ENCODE measurements at regions of chr6 and their contacts with region 1.

Region 1: GRCh38 chr6:6811151-6812002 is 222.9 kb downstream of the LY86 start:
- DNase-seq: peak; percentile 91
- H3K4me3 ChIP-seq: peak overlapping the region; percentile 24 to 69 (median 37)
- H3K27ac ChIP-seq: peak overlapping the region; percentile 91
- H3K4me1 ChIP-seq: peaks cover 17% of the 10 kb centered on the region
- H3K27me3 ChIP-seq: peaks cover 2 to 12% of the 10 kb centered on the region in 2 experiments
- CTCF ChIP-seq: no peak
- POLR2A ChIP-seq: no peak

Region 2: DNA sequence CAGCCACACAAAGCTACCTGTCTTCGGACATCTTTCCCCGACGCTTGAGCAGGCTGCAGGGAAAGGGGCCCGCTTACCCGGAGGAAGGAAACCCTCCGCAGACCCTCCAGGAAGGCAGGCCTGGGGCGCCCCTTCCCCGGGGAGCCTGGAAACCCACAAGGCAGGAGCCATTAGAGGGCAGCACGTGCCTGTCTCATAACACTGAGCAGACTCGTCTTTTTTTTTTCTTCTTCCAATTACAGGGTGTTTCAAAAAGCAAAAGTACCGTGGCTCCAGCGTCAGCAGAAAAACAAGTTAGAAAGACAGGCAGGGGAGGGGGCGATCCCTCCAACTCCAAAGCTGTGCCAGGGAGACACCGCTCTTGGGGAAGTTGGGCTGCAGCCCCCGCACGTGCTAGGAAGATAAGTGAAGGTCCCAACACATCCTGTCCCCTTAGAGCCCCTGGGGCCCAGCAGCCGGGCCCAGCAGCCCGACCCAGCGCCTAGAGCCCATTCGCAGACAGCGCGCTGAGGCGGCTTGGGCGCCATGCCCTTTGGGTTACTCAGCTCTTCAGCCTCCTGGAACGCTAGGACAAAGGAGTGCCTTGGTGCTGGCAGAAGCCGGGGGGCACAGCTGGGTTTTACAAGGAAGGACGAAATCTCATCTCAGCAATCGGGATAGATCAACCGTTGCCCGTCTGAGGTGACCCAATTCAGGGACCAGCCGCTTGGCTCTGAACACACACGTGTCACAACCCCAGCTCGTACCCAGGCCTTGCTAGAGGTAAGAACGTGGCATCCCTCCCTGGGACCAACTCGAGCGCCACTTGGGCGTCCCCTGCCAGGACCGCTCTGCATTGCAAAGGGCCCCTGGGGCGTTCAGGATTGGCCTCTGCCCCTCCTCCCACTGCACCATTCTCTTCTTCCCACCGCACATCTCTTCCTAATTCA is 86.6 kb before region 1 on chr6:
- CTCF ChIA-PET with region 1: no interaction called
- POLR2A ChIA-PET with region 1: no interaction called
- dilution Hi-C with region 1: no loop called
- intact Hi-C with region 1: loop called (anchors 1 kb)
- DNase-seq: peak; percentile 83
- H3K4me3 ChIP-seq: peak overlapping the region in 1 of 3 experiments; percentile 16
- H3K27ac ChIP-seq: peak overlapping the region; percentile 59
- H3K4me1 ChIP-seq: peaks cover 19% of the 10 kb centered on the region
- H3K27me3 ChIP-seq: peaks cover 0 to 2% of the 10 kb centered on the region in 2 experiments
- CTCF ChIP-seq: peak; percentile 57 to 60
- POLR2A ChIP-seq: no peak

Region 3: DNA sequence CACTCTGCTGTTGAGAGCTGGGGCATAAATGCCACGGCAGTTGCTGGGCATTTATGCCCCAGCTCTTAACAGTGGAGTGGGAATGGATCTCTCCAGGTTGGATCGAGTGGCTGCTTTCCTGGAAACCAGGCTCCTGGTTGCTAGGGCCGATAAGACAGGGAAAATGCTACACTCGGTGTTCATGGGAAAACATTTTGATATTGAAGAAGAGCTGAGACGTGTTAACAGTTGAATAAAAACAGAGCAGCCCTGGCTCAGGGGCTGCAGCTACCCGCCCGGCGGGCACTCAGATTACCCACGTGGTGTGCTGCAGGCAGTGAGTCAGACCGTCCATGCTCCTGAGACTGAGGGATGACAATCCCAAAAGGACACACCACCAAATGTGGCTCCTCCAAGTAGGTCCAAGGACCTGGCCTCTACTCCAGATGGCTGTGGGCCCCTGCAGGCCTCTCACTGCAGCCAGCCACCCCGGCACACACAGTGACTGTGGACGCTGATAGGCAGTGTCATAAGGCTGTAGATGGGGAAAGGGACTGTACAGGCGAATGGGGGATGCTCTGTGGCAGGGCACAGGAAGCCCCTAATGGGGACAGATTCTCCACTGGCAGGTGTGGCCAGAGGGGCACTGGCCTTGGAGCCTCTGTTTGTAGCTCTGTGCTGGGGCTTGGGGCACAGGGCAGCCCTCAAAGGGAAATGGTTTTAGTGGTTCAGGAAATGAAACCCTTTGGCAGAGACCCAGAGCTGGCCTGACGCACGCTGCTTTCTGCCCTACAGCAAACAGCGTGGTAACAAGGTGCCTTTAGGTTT is 14.9 kb after region 1 on chr6:
- CTCF ChIA-PET with region 1: interaction called, 9 read pairs
- POLR2A ChIA-PET with region 1: interaction called, 3 read pairs
- dilution Hi-C with region 1: no loop called
- intact Hi-C with region 1: loop called (anchors 1 kb)
- DNase-seq: peak; percentile 91
- H3K4me3 ChIP-seq: no peak overlapping the region
- H3K27ac ChIP-seq: peak overlapping the region; percentile 48
- H3K4me1 ChIP-seq: peaks cover 16% of the 10 kb centered on the region
- H3K27me3 ChIP-seq: peaks cover 0 to 2% of the 10 kb centered on the region in 2 experiments
- CTCF ChIP-seq: no peak
- POLR2A ChIP-seq: no peak

Region 4: DNA sequence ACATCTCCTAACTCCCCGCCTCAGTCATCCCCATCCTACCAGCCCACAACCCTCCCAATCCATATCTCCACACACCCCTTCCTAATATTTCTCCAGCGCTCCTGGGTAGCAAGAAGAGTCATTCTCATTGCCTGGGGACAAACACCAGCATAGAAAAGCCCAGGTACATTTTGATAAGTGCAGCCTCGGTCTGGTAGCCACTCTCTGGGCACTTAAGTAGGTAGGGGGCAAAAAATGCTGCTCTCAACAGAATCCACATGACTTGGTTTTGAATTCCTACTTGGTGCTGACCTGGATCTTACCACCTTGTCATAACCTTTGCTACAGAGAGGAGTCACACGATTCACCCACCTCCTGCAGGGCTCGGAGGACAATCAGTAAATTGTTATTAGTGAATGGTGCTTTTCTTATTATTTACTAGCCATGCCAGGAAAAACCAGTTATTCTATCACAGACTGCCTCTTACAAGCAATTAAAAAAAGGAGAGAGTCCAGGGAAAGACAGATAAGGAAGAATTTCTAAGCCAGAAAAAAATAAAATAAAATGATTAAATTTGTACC is 26.2 kb after region 1 on chr6:
- CTCF ChIA-PET with region 1: no interaction called
- POLR2A ChIA-PET with region 1: no interaction called
- dilution Hi-C with region 1: no loop called
- intact Hi-C with region 1: no loop called
- DNase-seq: no peak
- H3K4me3 ChIP-seq: no peak overlapping the region
- H3K27ac ChIP-seq: no peak overlapping the region
- H3K4me1 ChIP-seq: no peaks in the 10 kb centered on the region
- H3K27me3 ChIP-seq: peaks cover 2 to 9% of the 10 kb centered on the region in 2 experiments
- CTCF ChIP-seq: no peak
- POLR2A ChIP-seq: no peak

Region 5: GRCh38 chr6:6998194-6998569 is 186.8 kb after region 1 on chr6:
- CTCF ChIA-PET with region 1: no interaction called
- POLR2A ChIA-PET with region 1: no interaction called
- dilution Hi-C with region 1: no loop called
- intact Hi-C with region 1: no loop called
- DNase-seq: no peak
- H3K4me3 ChIP-seq: no peak overlapping the region
- H3K27ac ChIP-seq: no peak overlapping the region
- H3K4me1 ChIP-seq: no peaks in the 10 kb centered on the region
- H3K27me3 ChIP-seq: no peaks in the 10 kb centered on the region
- CTCF ChIP-seq: no peak
- POLR2A ChIP-seq: no peak

Region 6: DNA sequence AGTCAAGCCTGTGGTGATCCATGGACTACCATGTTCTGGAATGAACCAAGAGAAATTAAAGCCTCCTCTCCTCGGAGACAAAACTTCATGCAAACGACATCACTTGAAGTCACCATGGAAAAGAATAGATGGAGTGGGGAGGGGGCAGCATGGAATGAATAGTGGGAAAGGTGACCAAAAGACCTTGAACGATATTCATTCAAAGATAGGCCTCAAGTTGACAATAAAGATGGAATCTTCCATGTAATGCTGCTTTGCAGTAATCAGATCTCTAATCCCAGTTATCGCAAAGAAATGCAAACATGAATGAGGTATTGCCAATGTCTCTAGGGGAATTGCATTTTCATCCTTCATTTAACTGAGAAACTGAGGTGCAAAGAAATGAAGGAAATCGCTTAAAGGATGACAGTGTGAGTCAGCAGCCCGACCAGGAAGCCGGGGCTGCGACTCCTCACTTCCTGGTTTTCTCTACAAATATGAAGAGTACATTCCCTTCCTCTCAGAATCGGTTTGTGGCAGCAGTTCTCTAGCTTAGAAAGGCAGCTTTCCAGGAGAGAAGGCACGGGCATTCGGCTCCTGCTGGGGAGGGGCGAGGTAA is 230.8 kb after region 1 on chr6:
- CTCF ChIA-PET with region 1: no interaction called
- POLR2A ChIA-PET with region 1: no interaction called
- dilution Hi-C with region 1: no loop called
- intact Hi-C with region 1: loop called (anchors 1 kb)
- DNase-seq: peak; percentile 78
- H3K4me3 ChIP-seq: peak overlapping the region in 1 of 3 experiments; percentile 19
- H3K27ac ChIP-seq: peak overlapping the region; percentile 81
- H3K4me1 ChIP-seq: peaks cover 22% of the 10 kb centered on the region
- H3K27me3 ChIP-seq: no peaks in the 10 kb centered on the region
- CTCF ChIP-seq: no peak
- POLR2A ChIP-seq: peak; percentile 39

Region 7: DNA sequence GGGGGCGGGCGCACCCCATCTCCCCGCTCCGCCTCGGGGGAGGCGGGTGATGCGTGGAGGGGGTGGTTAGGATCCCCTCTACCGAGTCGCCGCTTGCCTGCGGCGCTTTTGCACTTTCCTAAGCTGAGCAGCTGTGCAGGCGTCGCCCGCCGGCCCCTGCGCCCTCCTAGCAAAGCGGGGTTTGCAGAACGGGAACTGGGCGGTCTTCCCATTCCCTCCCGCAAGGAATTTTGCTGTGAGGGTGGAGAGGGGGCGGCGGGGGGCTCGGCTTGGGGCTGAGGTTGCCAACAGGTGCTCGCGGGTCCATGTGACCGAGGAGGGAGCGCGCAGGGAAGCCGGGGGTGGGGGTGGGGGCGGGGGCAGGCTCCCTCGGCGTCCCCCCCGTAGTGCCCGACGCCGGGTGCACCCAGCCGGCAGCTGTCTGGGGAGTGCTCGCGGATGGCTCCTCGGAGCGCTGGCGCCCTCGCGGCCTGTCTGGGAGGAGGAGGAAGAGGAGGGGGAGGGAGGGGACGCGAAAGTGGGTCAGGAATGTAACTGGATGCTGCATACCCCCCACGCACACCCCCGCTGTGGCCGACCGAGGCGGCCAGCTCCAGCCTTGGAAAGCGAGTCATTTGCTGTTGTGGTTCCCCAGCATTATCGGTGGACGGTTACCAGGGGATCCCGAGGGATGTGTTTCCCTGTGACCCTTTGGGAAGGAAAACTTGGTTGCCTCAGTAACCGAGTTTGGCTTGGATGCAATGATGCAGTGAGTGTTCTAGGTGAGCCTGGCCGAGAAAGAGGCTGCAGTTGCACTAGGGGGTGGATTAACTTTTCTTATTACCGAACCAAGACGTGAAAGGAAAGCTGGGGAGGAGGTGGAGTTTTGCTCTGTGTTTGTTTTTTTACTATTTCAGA is 241.0 kb after region 1 on chr6:
- CTCF ChIA-PET with region 1: no interaction called
- POLR2A ChIA-PET with region 1: no interaction called
- dilution Hi-C with region 1: no loop called
- intact Hi-C with region 1: no loop called
- DNase-seq: peak; percentile 11
- H3K4me3 ChIP-seq: peak overlapping the region; percentile 48 to 63 (median 62)
- H3K27ac ChIP-seq: no peak overlapping the region
- H3K4me1 ChIP-seq: peaks cover 9% of the 10 kb centered on the region
- H3K27me3 ChIP-seq: no peaks in the 10 kb centered on the region
- CTCF ChIP-seq: no peak
- POLR2A ChIP-seq: no peak

Region 8: DNA sequence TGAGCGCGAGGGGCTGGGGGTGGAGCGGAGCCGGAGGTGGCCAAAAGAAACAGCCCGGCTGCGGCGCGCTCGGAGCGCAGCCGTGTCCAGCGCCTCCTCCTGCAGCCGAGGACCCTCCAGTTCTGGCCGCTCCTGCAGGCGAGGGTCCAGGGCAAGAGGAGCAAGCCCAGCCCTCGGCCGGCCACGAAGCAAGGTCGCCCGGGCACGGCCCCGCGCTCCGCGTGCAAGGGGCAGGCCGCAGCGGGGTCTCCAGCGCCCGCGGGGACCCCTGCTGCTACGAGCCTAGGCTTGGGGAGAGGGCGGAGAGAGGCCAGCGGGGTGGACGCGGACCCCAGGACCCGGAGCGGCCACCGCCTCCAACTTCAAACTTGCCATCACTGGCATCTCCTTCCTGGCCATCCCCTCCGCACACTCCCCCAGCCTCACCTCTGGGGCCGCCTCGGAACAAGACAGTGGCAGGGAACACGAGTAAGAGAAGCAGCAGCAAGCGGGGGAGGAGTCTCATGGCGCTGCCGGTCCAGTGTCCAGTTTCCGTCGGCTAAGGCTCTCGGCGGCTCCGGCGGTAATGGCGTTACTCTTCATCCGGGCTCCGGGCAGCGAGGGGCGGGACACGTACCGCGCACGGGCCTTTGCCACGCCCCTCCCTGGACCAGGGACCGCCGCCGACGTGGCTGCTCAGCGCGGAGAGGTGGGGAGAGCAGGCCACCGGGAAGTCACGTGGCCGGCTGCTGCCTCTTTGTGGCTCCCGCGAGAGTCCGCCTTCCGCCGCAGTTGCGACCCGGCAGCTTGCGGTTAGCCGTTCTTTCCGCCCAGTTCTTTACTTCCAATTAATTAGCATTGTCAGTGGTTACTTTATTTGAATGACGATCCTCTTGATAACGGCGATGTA is 501.5 kb after region 1 on chr6 and contains the start of gene SSR1:
- CTCF ChIA-PET with region 1: no interaction called
- POLR2A ChIA-PET with region 1: no interaction called
- dilution Hi-C with region 1: no loop called
- intact Hi-C with region 1: loop called (anchors 2 kb)
- DNase-seq: peak; percentile 98
- H3K4me3 ChIP-seq: peak within 1 kb of the TSS; percentile 95 to 99 (median 98)
- H3K27ac ChIP-seq: peak within 1 kb of the TSS; percentile 88
- H3K4me1 ChIP-seq: peaks cover 16% of the 10 kb centered on the region
- H3K27me3 ChIP-seq: peaks cover 0 to 2% of the 10 kb centered on the region in 2 experiments
- CTCF ChIP-seq: no peak
- POLR2A ChIP-seq: peak; percentile 89
- total RNA-seq, gene SSR1: 149 and 187 TPM in 2 replicates

Measured in endothelial cell of umbilical vein (primary cell).